ENCODE measurements at regions of chr12 and their contacts with region 1.

Region 1: DNA sequence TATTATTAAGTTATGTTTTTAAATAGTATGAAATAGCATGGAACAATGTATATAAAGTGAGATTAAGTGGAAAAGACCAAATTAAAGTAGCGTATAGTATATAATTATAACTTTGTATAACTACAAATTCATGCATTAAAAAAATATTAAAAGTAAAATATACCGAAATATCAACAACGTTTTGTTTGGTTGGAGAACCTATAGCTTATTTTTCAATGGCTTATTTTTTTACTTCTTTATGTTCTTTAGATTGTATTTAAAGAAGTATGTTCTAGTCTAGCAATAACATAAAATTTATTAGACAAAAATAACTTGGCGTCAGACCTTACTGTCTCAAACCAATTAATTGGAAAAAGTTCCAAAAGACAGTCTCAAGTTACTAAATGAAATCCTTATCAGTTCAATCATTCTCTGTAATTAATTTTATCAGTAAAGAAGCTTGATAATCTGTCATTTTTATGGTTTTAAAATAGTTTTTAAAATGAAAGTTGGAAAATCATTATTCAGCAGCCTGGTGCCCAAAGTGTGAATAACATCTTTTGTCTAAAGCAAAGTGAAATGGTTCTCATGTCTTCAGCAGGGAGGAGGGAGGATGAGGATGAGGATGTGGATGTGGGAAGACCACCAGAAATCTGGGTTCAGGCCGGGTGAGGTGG is 46.7 kb downstream of the IRAK3 start:
- DNase-seq: no peak
- ATAC-seq: no peak
- H3K4me3 ChIP-seq: peak overlapping the region in 9 of 10 donors; percentile 40 to 67 (median 61)
- H3K27ac ChIP-seq: peak overlapping the region in 7 of 10 donors; percentile 12 to 87 (median 49)
- H3K4me1 ChIP-seq: peaks cover 0 to 67% (median 7%) of the 10 kb centered on the region in 9 donors
- H3K27me3 ChIP-seq: no peaks in the 10 kb centered on the region
- CTCF ChIP-seq: no peak

Region 2: GRCh38 chr12:65594409-65594808 is 641.3 kb before region 1 on chr12:
- intact Hi-C with region 1: no loop called
- DNase-seq: no peak
- ATAC-seq: no peak
- H3K4me3 ChIP-seq: no peak overlapping the region
- H3K27ac ChIP-seq: no peak overlapping the region
- H3K4me1 ChIP-seq: peaks cover 0 to 17% (median 0%) of the 10 kb centered on the region in 9 donors
- H3K27me3 ChIP-seq: peaks cover 0 to 19% (median 0%) of the 10 kb centered on the region in 7 donors
- CTCF ChIP-seq: no peak

Region 3: GRCh38 chr12:65858831-65859230 is 376.9 kb before region 1 on chr12:
- intact Hi-C with region 1: no loop called
- DNase-seq: no peak
- ATAC-seq: no peak
- H3K4me3 ChIP-seq: no peak overlapping the region
- H3K27ac ChIP-seq: no peak overlapping the region
- H3K4me1 ChIP-seq: peaks cover 0 to 6% (median 0%) of the 10 kb centered on the region in 9 donors
- H3K27me3 ChIP-seq: no peaks in the 10 kb centered on the region
- CTCF ChIP-seq: no peak

Region 4: GRCh38 chr12:66188584-66189485 is 46.9 kb before region 1 on chr12 and contains the start of gene IRAK3:
- intact Hi-C with region 1: loop called in 1 of 10 experiments (anchors 10 kb)
- DNase-seq: peak; percentile 83 to 89
- ATAC-seq: peak; percentile 92 to 99 (median 97)
- H3K4me3 ChIP-seq: peak within 1 kb of the TSS; percentile 22 to 73 (median 62)
- H3K27ac ChIP-seq: peak within 1 kb of the TSS; percentile 80 to 99 (median 92)
- H3K4me1 ChIP-seq: peaks cover 0 to 48% (median 18%) of the 10 kb centered on the region in 9 donors
- H3K27me3 ChIP-seq: peaks cover 0 to 8% (median 3%) of the 10 kb centered on the region in 7 donors
- CTCF ChIP-seq: no peak
- total RNA-seq, gene IRAK3: 2.8 to 9.3 (median 4.3) TPM

Region 5: DNA sequence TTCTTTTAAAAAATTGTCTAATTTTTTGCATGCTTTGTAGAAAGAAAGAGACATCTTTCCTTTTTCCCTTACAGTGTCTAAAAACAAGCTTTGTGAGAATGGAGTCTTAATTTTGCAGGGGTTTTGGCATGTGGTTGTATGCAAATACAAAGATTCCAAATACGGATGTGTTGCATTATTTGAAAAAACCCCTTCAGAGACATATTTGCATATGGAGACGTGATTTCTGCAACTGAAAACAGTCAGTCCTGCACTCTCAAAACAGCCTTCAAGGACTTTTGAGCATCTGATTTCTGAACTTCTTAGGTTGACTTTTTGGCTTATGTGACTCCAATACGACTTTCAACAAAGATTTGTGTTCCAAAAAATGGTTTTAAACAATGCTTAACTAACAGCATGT is 38.9 kb before region 1 on chr12:
- intact Hi-C with region 1: loop called in 1 of 10 experiments (anchors 1 kb)
- DNase-seq: no peak
- ATAC-seq: no peak
- H3K4me3 ChIP-seq: no peak overlapping the region
- H3K27ac ChIP-seq: peak overlapping the region in 2 of 10 donors; percentile 1 to 75
- H3K4me1 ChIP-seq: peaks cover 0 to 64% (median 19%) of the 10 kb centered on the region in 9 donors
- H3K27me3 ChIP-seq: no peaks in the 10 kb centered on the region
- CTCF ChIP-seq: no peak